K562 (cell line): ENCODE measurements at regions of chr4 and their contacts with region 1.

Region 1: GRCh38 chr4:143482840-143483239 is 30.7 kb upstream of the SMARCA5 start:
- DNase-seq: peak in 2 of 4 experiments; percentile 33 to 56
- ATAC-seq: peak; percentile 83
- H3K4me3 ChIP-seq: no peak overlapping the region
- H3K27ac ChIP-seq: no peak overlapping the region
- H3K4me1 ChIP-seq: no peaks in the 10 kb centered on the region; a peak in 1 of 5 replicates
- H3K27me3 ChIP-seq: no peaks in the 10 kb centered on the region
- CTCF ChIP-seq: peak; percentile 39 to 77 (median 58); a peak in 5 of 6 replicates
- EP300 ChIP-seq: no peak
- POLR2A ChIP-seq: no peak
- RAD21 ChIP-seq: peak; percentile 86 to 88

Region 2: DNA sequence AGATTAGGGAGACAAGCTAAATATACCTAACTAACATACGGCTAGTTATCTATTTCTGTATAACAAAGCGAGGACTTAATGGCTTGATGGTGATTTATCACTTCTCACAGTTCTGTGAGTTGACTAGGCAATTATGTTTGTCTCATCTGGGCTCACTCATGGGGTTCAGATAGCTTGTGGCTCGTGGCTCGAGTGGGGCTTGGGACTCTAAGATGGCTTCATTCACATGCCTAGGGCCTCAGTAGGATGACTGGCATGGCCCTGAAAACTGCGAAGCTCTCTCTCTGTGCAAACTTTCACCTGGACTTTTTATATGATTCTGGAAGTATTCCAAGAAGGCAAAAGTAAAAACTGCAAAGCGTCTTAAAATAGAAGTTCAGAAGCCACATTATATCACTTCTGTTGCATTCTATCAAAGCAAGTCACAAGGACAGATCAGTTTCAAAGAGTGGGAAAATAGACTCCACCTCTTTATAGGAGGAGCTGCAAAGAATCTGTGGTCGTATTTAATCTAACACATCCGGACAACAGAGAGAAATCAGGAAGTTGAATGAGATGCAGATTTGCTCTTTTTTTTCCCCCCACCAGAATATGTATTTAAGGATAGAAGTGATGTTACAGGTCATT is 1127.9 kb before region 1 on chr4:
- CTCF ChIA-PET with region 1: no interaction called
- POLR2A ChIA-PET with region 1: no interaction called
- in situ Hi-C with region 1: no loop called
- intact Hi-C with region 1: loop called (anchors 5 kb)
- DNase-seq: no peak
- ATAC-seq: no peak
- H3K4me3 ChIP-seq: no peak overlapping the region
- H3K27ac ChIP-seq: no peak overlapping the region
- H3K4me1 ChIP-seq: no peaks in the 10 kb centered on the region
- H3K27me3 ChIP-seq: no peaks in the 10 kb centered on the region
- CTCF ChIP-seq: no peak
- EP300 ChIP-seq: no peak
- POLR2A ChIP-seq: no peak
- RAD21 ChIP-seq: no peak

Region 3: GRCh38 chr4:142474335-142475087 is 1008.3 kb before region 1 on chr4:
- CTCF ChIA-PET with region 1: no interaction called
- POLR2A ChIA-PET with region 1: no interaction called
- in situ Hi-C with region 1: no loop called
- intact Hi-C with region 1: no loop called
- DNase-seq: no peak
- ATAC-seq: no peak
- H3K4me3 ChIP-seq: no peak overlapping the region
- H3K27ac ChIP-seq: no peak overlapping the region
- H3K4me1 ChIP-seq: no peaks in the 10 kb centered on the region
- H3K27me3 ChIP-seq: no peaks in the 10 kb centered on the region
- CTCF ChIP-seq: no peak
- EP300 ChIP-seq: no peak
- POLR2A ChIP-seq: no peak
- RAD21 ChIP-seq: no peak

Region 4: GRCh38 chr4:143085224-143085623 is 397.6 kb before region 1 on chr4:
- CTCF ChIA-PET with region 1: no interaction called
- POLR2A ChIA-PET with region 1: no interaction called
- in situ Hi-C with region 1: no loop called
- intact Hi-C with region 1: loop called (anchors 10 kb)
- DNase-seq: no peak
- ATAC-seq: no peak
- H3K4me3 ChIP-seq: no peak overlapping the region
- H3K27ac ChIP-seq: no peak overlapping the region
- H3K4me1 ChIP-seq: no peaks in the 10 kb centered on the region
- H3K27me3 ChIP-seq: no peaks in the 10 kb centered on the region
- CTCF ChIP-seq: no peak
- EP300 ChIP-seq: no peak
- POLR2A ChIP-seq: no peak
- RAD21 ChIP-seq: peak in 1 of 2 experiments; percentile 33; a peak in 1 of 4 replicates

Region 5: DNA sequence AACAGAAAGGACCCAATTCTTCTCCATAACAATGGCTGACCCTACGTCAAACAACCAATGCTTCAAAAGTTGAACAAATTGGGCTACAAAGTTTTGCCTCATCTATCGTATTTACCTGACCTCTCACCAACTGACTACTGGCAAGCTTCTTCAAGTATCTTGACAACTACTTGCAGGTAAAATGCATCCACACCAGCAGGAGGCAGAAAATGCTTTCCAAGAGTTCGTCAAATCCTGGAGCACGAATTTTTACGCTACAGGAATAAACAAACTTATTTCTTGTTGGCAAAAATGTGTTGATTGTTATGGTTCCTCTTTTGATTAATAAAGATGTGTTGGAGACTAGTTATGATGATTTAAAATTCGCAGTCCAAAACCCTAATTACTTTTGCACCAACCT is 152.9 kb before region 1 on chr4:
- CTCF ChIA-PET with region 1: no interaction called
- POLR2A ChIA-PET with region 1: no interaction called
- in situ Hi-C with region 1: no loop called
- intact Hi-C with region 1: loop called (anchors 1 kb)
- DNase-seq: no peak
- ATAC-seq: 0 out of 3 replicates have a peak, but pooled peaks have one; percentile 52
- H3K4me3 ChIP-seq: no peak overlapping the region
- H3K27ac ChIP-seq: no peak overlapping the region
- H3K4me1 ChIP-seq: no peaks in the 10 kb centered on the region
- H3K27me3 ChIP-seq: no peaks in the 10 kb centered on the region
- CTCF ChIP-seq: peak; percentile 18 to 47 (median 35); a peak in 3 of 6 replicates
- EP300 ChIP-seq: no peak
- POLR2A ChIP-seq: no peak
- RAD21 ChIP-seq: peak in 1 of 2 experiments; percentile 48; a peak in 3 of 4 replicates

Region 6: GRCh38 chr4:143382596-143382995 is 100.2 kb before region 1 on chr4:
- CTCF ChIA-PET with region 1: no interaction called
- POLR2A ChIA-PET with region 1: no interaction called
- in situ Hi-C with region 1: no loop called
- intact Hi-C with region 1: no loop called
- DNase-seq: no peak
- ATAC-seq: peak; percentile 4; the same call in 1 of the 3 replicates
- H3K4me3 ChIP-seq: no peak overlapping the region
- H3K27ac ChIP-seq: peak overlapping the region; percentile 54; the same call in 1 of the 3 replicates
- H3K4me1 ChIP-seq: peaks cover 5 to 20% of the 10 kb centered on the region in 2 experiments; a peak in 4 of 5 replicates
- H3K27me3 ChIP-seq: no peaks in the 10 kb centered on the region
- CTCF ChIP-seq: no peak
- EP300 ChIP-seq: no peak
- POLR2A ChIP-seq: no peak
- RAD21 ChIP-seq: no peak

Region 7: DNA sequence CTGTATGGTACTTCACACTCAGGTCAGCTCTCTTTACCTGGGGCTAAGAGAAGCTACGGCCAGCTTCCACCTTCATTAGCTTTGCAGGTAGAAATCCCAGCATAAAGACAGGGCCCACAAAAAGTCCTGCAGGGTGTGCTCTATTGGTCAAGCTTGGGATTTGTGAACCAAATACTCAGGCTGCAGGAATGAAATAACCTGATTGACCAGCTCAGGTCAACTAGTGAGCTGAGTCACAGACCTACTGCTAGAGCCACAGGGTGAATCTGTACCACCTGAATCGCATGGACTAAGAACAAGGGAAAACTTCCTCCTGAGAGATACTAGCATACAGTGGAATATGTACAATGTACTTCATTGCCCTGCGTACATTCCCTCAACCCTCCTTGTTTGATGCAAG is 1335.3 kb after region 1 on chr4:
- CTCF ChIA-PET with region 1: no interaction called
- POLR2A ChIA-PET with region 1: no interaction called
- in situ Hi-C with region 1: no loop called
- intact Hi-C with region 1: no loop called
- DNase-seq: no peak
- ATAC-seq: no peak
- H3K4me3 ChIP-seq: no peak overlapping the region
- H3K27ac ChIP-seq: no peak overlapping the region
- H3K4me1 ChIP-seq: no peaks in the 10 kb centered on the region
- H3K27me3 ChIP-seq: no peaks in the 10 kb centered on the region
- CTCF ChIP-seq: no peak
- EP300 ChIP-seq: no peak
- POLR2A ChIP-seq: no peak
- RAD21 ChIP-seq: no peak